Activated CD4-positive, alpha-beta T cell treated with anti-CD3 and anti-CD28 coated beads for 36 hours (primary cell): ENCODE measurements at regions of chrX and their contacts with region 1.

Region 1: GRCh38 chrX:136635235-136635634 is 12.7 kb upstream of the CD40LG start:
- DNase-seq: no peak
- ATAC-seq: peak; percentile 79
- H3K4me3 Mint-ChIP-seq: peak overlapping the region; percentile 64
- H3K27ac Mint-ChIP-seq: peak overlapping the region; percentile 92
- H3K4me1 Mint-ChIP-seq: peaks cover 83% of the 10 kb centered on the region
- H3K27me3 Mint-ChIP-seq: no peaks in the 10 kb centered on the region

Region 2: GRCh38 chrX:136616987-136617685 is 18.1 kb before region 1 on chrX:
- CTCF ChIA-PET with region 1: interaction called, 4 read pairs
- POLR2A ChIA-PET with region 1: interaction called, 4 read pairs
- intact Hi-C with region 1: loop called in 1 of 2 experiments (anchors 2 kb)
- DNase-seq: peak; percentile 53
- ATAC-seq: peak; percentile 82
- H3K4me3 Mint-ChIP-seq: peak overlapping the region; percentile 44
- H3K27ac Mint-ChIP-seq: peak overlapping the region; percentile 87
- H3K4me1 Mint-ChIP-seq: peaks cover 79% of the 10 kb centered on the region
- H3K27me3 Mint-ChIP-seq: no peaks in the 10 kb centered on the region

Region 3: DNA sequence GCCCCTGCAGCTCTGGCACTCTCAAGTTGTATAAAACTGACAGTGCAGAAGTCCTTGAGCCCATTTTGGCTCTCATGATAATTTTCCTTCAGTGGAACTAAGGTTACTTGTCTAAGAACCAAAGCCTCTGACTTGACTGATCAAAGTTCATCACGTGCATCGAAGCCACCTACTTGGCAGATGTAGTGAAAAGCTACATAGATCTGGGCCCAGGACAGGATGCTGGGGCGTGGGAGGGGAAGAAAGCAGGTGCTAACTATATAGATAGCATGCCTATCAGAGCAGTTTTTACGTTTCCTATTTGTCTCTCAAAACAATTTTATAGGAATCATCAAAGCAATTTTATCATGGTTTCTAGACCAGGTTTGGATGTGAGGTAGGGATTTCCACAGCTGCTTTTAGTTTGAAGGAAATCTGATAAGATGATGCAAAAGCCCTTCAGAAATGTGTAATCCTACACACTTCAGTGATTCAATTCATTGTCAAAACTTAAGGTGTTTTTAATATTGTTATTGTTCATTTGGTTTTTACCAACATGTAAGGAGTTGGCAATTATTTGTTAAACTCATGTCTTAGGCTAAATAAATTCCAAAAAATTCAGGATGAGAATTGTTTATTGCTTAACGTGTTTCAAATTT is 11.5 kb after region 1 on chrX:
- CTCF ChIA-PET with region 1: interaction called, 16 read pairs
- POLR2A ChIA-PET with region 1: interaction called, 3 read pairs
- intact Hi-C with region 1: loop called (anchors 1 kb)
- DNase-seq: peak; percentile 84
- ATAC-seq: peak; percentile 60
- H3K4me3 Mint-ChIP-seq: peak overlapping the region; percentile 96
- H3K27ac Mint-ChIP-seq: peak overlapping the region; percentile 100
- H3K4me1 Mint-ChIP-seq: peaks cover 57% of the 10 kb centered on the region
- H3K27me3 Mint-ChIP-seq: no peaks in the 10 kb centered on the region